ENCODE measurements at regions of chr17 and their contacts with region 1.

Region 1: GRCh38 chr17:1573916-1574696 is 11.5 kb upstream of the PITPNA start:
- DNase-seq: peak; percentile 70 to 100 (median 92)
- ATAC-seq: peak; percentile 72 to 83 (median 81)
- H3K4me3 ChIP-seq: no peak overlapping the region
- H3K27ac ChIP-seq: peak overlapping the region; percentile 38 to 92 (median 54)
- H3K4me1 ChIP-seq: peaks cover 6 to 26% (median 13%) of the 10 kb centered on the region in 3 donors
- H3K27me3 ChIP-seq: no peaks in the 10 kb centered on the region
- CTCF ChIP-seq: peak; percentile 95 to 99 (median 96)

Region 2: GRCh38 chr17:1606352-1607033 is 32.4 kb after region 1 on chr17:
- intact Hi-C with region 1: no loop called
- DNase-seq: peak in 1 of 6 donors; percentile 20
- ATAC-seq: peak in 3 of 4 donors; percentile 15 to 78 (median 67)
- H3K4me3 ChIP-seq: no peak overlapping the region
- H3K27ac ChIP-seq: peak overlapping the region in 3 of 4 donors; percentile 22 to 47 (median 36)
- H3K4me1 ChIP-seq: no peaks in the 10 kb centered on the region
- H3K27me3 ChIP-seq: no peaks in the 10 kb centered on the region
- CTCF ChIP-seq: no peak

Region 3: GRCh38 chr17:1629647-1630310 is 55.7 kb after region 1 on chr17:
- intact Hi-C with region 1: loop called in 1 of 3 experiments (anchors 5 kb)
- DNase-seq: peak; percentile 50 to 91 (median 80)
- ATAC-seq: peak; percentile 22 to 63 (median 50)
- H3K4me3 ChIP-seq: peak overlapping the region; percentile 44 to 93 (median 70)
- H3K27ac ChIP-seq: peak overlapping the region; percentile 67 to 98 (median 88)
- H3K4me1 ChIP-seq: peaks cover 0 to 5% (median 4%) of the 10 kb centered on the region in 3 donors
- H3K27me3 ChIP-seq: no peaks in the 10 kb centered on the region
- CTCF ChIP-seq: peak; percentile 35 to 74 (median 50)

Region 4: GRCh38 chr17:1639549-1640343 is 65.6 kb after region 1 on chr17:
- intact Hi-C with region 1: loop called in 2 of 3 experiments (anchors 5 kb)
- DNase-seq: peak in 3 of 6 donors; percentile 40 to 49 (median 47)
- ATAC-seq: peak in 3 of 4 donors; percentile 7 to 42 (median 7)
- H3K4me3 ChIP-seq: no peak overlapping the region
- H3K27ac ChIP-seq: no peak overlapping the region
- H3K4me1 ChIP-seq: peaks cover 6 to 14% (median 8%) of the 10 kb centered on the region in 3 donors
- H3K27me3 ChIP-seq: no peaks in the 10 kb centered on the region
- CTCF ChIP-seq: no peak

Region 5: GRCh38 chr17:1649844-1650501 is 75.9 kb after region 1 on chr17 and contains the start of gene RILP:
- intact Hi-C with region 1: no loop called
- DNase-seq: peak; percentile 89 to 98 (median 96)
- ATAC-seq: peak; percentile 75 to 81 (median 80)
- H3K4me3 ChIP-seq: peak within 1 kb of the TSS; percentile 67 to 85 (median 75)
- H3K27ac ChIP-seq: peak within 1 kb of the TSS; percentile 96 to 100 (median 98)
- H3K4me1 ChIP-seq: peaks cover 17 to 25% (median 21%) of the 10 kb centered on the region in 3 donors
- H3K27me3 ChIP-seq: no peaks in the 10 kb centered on the region
- CTCF ChIP-seq: no peak
- total RNA-seq, gene RILP: 6.6 to 9.0 (median 7.8) TPM

Region 6: DNA sequence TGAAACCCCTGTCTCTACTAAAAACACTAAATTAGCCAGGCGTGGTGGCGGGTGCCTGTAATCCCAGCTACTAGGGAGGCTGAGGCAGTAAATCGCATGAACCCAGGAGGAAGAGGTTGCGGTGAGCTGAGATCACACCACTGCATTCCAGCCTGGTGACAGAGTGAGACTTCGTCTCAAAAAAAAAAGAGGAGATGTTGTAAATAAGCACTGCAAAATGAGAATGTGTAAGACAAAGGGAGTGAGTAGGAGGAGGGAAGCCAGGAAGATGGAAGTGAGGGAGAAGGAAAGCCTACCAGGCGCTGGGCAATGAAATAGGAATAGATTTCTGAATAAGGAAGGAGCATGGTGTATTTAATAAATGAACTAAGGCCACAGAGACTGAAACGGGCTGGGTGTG is 119.2 kb after region 1 on chr17:
- intact Hi-C with region 1: no loop called
- DNase-seq: no peak
- ATAC-seq: no peak
- H3K4me3 ChIP-seq: no peak overlapping the region
- H3K27ac ChIP-seq: no peak overlapping the region
- H3K4me1 ChIP-seq: no peaks in the 10 kb centered on the region
- H3K27me3 ChIP-seq: no peaks in the 10 kb centered on the region
- CTCF ChIP-seq: no peak